Ovary (tissue), 10 donors: ENCODE measurements at regions of chr9 and their contacts with region 1.

Region 1: DNA sequence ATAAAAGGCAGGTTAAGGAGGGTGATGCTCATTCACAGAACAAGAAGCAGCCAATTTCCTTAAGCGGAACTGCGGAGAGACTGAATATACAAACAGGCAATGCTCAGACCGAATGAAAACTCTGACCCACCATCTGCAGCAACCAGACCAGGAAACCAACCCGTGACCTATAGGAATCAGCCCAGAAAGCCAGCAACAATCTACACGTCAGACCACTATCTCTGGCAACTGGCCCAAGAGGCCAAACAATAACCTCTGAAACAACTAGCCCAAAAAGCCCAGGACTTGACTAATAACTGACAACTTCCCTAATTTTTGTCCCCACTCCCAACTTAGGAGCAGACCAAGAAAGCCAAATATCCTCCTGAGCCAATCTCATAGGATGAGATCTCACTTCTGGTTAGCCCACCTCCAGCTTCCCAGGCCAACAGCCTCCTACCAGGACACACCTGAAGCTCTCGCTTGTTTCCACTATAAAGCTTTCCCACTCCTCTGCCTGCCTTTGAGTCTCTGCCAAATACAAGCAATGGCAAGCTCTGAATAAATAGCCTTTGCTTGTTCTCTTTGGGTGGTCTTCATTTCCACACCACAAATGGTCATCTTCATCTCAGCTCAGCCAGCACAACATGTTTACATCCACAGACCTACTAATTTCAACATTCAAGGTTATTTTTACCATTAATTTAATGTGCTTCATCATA is 168.5 kb downstream of the HSD17B3 start:
- DNase-seq: no peak
- H3K4me3 ChIP-seq: no peak overlapping the region
- H3K27ac ChIP-seq: no peak overlapping the region
- H3K4me1 ChIP-seq: peaks cover 3% of the 10 kb centered on the region
- H3K27me3 ChIP-seq: no peaks in the 10 kb centered on the region
- CTCF ChIP-seq: no peak
- EP300 ChIP-seq: no peak
- POLR2A ChIP-seq: no peak

Region 2: GRCh38 chr9:96116275-96117064 is 17.0 kb before region 1 on chr9:
- intact Hi-C with region 1: loop called in 1 of 4 experiments (anchors 1 kb)
- DNase-seq: no peak
- H3K4me3 ChIP-seq: no peak overlapping the region
- H3K27ac ChIP-seq: no peak overlapping the region
- H3K4me1 ChIP-seq: no peaks in the 10 kb centered on the region
- H3K27me3 ChIP-seq: no peaks in the 10 kb centered on the region
- CTCF ChIP-seq: no peak
- EP300 ChIP-seq: no peak
- POLR2A ChIP-seq: no peak